Naive thymus-derived CD4-positive, alpha-beta T cell (primary cell): ENCODE measurements at regions of chr5 and their contacts with region 1.

Region 1: GRCh38 chr5:116574367-116575325 is at the start of gene SEMA6A:
- DNase-seq: peak in 2 of 9 donors; percentile 5 to 72
- ATAC-seq: peak; percentile 55
- H3K4me3 ChIP-seq: no peak within 1 kb of the TSS
- H3K4me3 Mint-ChIP-seq: peak within 1 kb of the TSS; percentile 71 to 86 (median 78)
- H3K27ac ChIP-seq: no peak within 1 kb of the TSS
- H3K27ac Mint-ChIP-seq: peak within 1 kb of the TSS in 1 of 9 donors; percentile 79
- H3K4me1 ChIP-seq: peaks cover 0 to 8% of the 10 kb centered on the region in 2 donors
- H3K4me1 Mint-ChIP-seq: peaks cover 15 to 31% (median 22%) of the 10 kb centered on the region in 7 donors
- H3K27me3 ChIP-seq: peaks cover 0 to 12% of the 10 kb centered on the region in 2 donors
- H3K27me3 Mint-ChIP-seq: peaks cover 62 to 90% (median 72%) of the 10 kb centered on the region in 5 donors
- total RNA-seq, gene SEMA6A: not detected

Region 2: DNA sequence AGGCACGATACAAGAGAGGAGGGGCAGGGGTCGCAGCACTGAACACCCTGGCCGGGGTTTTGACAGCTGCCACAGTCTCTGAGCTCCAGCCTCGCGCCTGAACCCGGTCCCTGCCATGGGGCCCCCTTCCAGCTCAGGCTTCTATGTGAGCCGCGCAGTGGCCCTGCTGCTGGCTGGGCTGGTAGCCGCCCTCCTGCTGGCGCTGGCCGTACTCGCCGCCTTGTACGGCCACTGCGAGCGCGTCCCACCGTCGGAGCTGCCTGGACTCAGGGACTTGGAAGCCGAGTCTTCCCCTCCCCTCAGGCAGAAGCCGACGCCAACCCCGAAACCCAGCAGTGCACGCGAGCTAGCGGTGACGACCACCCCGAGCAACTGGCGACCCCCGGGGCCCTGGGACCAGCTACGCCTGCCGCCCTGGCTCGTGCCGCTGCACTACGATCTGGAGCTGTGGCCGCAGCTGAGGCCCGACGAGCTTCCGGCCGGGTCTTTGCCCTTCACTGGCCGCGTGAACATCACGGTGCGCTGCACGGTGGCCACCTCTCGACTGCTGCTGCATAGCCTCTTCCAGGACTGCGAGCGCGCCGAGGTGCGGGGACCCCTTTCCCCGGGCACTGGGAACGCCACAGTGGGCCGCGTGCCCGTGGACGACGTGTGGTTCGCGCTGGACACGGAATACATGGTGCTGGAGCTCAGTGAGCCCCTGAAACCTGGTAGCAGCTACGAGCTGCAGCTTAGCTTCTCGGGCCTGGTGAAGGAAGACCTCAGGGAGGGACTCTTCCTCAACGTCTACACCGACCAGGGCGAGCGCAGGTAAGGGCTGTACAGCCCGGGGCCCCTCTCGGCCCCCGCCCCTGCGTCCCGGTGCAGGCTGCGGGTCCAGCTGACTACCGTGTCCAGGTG is 611.9 kb before region 1 on chr5:
- CTCF ChIA-PET with region 1: no interaction called
- POLR2A ChIA-PET with region 1: no interaction called
- intact Hi-C with region 1: loop called in 1 of 2 experiments (anchors 10 kb)
- DNase-seq: no peak
- ATAC-seq: peak; percentile 38
- H3K4me3 ChIP-seq: no peak overlapping the region
- H3K4me3 Mint-ChIP-seq: peak overlapping the region in 4 of 10 donors; percentile 17 to 55 (median 37)
- H3K27ac ChIP-seq: no peak overlapping the region
- H3K27ac Mint-ChIP-seq: no peak overlapping the region
- H3K4me1 ChIP-seq: no peaks in the 10 kb centered on the region
- H3K4me1 Mint-ChIP-seq: peaks cover 3 to 19% (median 10%) of the 10 kb centered on the region in 7 donors
- H3K27me3 ChIP-seq: peaks cover 0 to 3% of the 10 kb centered on the region in 2 donors
- H3K27me3 Mint-ChIP-seq: peaks cover 52 to 66% (median 62%) of the 10 kb centered on the region in 5 donors

Region 3: GRCh38 chr5:116585227-116585626 is 10.6 kb after region 1 on chr5:
- CTCF ChIA-PET with region 1: no interaction called
- POLR2A ChIA-PET with region 1: no interaction called
- intact Hi-C with region 1: no loop called
- DNase-seq: no peak
- ATAC-seq: no peak
- H3K4me3 ChIP-seq: no peak overlapping the region
- H3K4me3 Mint-ChIP-seq: no peak overlapping the region
- H3K27ac ChIP-seq: no peak overlapping the region
- H3K27ac Mint-ChIP-seq: no peak overlapping the region
- H3K4me1 ChIP-seq: no peaks in the 10 kb centered on the region
- H3K4me1 Mint-ChIP-seq: no peaks in the 10 kb centered on the region
- H3K27me3 ChIP-seq: peaks cover 5% of the 10 kb centered on the region in 2 donors
- H3K27me3 Mint-ChIP-seq: peaks cover 23 to 44% (median 35%) of the 10 kb centered on the region in 5 donors

Region 4: DNA sequence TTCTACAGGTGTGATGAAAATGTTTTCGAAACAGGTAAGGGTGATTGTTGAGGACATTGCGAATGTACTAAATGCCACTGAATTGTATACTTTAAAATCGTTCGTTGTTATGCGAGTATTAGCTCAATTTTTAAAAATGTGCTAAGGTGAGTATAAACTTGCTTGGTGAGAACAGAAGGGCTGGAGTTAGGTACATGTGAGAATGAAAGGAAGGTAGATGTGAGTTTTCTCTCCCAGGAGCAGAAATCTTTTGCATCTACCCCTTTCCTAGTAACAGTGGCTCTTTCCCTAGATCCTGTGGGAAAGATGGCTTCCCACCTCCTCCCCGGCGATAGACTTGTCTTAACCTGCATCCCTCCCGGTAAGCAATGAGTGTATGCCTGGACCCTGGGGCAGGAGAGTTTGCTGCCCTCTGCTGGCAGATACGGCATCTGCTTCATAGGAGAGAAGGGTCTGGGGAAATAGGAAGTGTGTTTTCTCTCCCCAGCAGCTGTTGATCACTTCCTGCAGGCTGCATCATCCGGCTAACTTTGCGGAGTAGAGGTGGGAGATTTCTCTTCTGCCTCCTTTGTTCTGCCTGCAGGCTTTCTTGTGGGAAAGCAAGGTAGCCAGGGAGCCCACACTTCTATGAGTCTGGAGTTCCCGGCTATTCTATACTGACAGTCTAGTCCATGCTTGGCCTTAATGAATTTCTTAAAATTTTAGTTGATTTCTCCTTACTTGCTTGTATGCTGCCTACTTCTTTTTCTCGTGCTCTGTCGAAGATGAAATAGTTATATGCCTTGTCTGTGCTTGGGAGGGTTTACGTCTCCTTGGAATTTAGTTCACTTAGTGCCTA is 373.3 kb after region 1 on chr5:
- CTCF ChIA-PET with region 1: no interaction called
- POLR2A ChIA-PET with region 1: no interaction called
- intact Hi-C with region 1: loop called in 1 of 2 experiments (anchors 1 kb)
- DNase-seq: peak in 7 of 9 donors; percentile 18 to 58 (median 27)
- ATAC-seq: peak; percentile 74
- H3K4me3 ChIP-seq: no peak overlapping the region
- H3K4me3 Mint-ChIP-seq: no peak overlapping the region
- H3K27ac ChIP-seq: no peak overlapping the region
- H3K27ac Mint-ChIP-seq: no peak overlapping the region
- H3K4me1 ChIP-seq: no peaks in the 10 kb centered on the region
- H3K4me1 Mint-ChIP-seq: peaks cover 0 to 1% (median 0%) of the 10 kb centered on the region in 7 donors
- H3K27me3 ChIP-seq: no peaks in the 10 kb centered on the region
- H3K27me3 Mint-ChIP-seq: peaks cover 0 to 5% (median 3%) of the 10 kb centered on the region in 5 donors